ENCODE measurements at regions of chr4 and their contacts with region 1.

Region 1: GRCh38 chr4:184474263-184475095 is at the start of gene IRF2:
- DNase-seq: peak; percentile 99
- H3K4me3 ChIP-seq: peak within 1 kb of the TSS; percentile 60 to 87 (median 80)
- H3K27ac ChIP-seq: peak within 1 kb of the TSS; percentile 96 to 100 (median 100)
- H3K4me1 ChIP-seq: peaks cover 49 to 76% (median 67%) of the 10 kb centered on the region in 6 donors
- H3K27me3 ChIP-seq: no peaks in the 10 kb centered on the region
- CTCF ChIP-seq: peak in 8 of 11 experiments; percentile 24 to 70 (median 54)
- POLR2A ChIP-seq: peak; percentile 91 to 97 (median 96)
- total RNA-seq, gene IRF2: 83.2 to 101 (median 90.1) TPM

Region 2: GRCh38 chr4:184263910-184264732 is 210.4 kb before region 1 on chr4:
- intact Hi-C with region 1: loop called (anchors 10 kb)
- DNase-seq: peak; percentile 96
- H3K4me3 ChIP-seq: peak overlapping the region in 1 of 8 donors; percentile 43
- H3K27ac ChIP-seq: peak overlapping the region in 5 of 8 donors; percentile 20 to 71 (median 60)
- H3K4me1 ChIP-seq: peaks cover 3 to 57% (median 45%) of the 10 kb centered on the region in 6 donors
- H3K27me3 ChIP-seq: no peaks in the 10 kb centered on the region
- CTCF ChIP-seq: peak; percentile 54 to 95 (median 89)
- POLR2A ChIP-seq: no peak

Region 3: GRCh38 chr4:184343502-184344177 is 130.8 kb before region 1 on chr4:
- intact Hi-C with region 1: loop called (anchors 10 kb)
- DNase-seq: peak; percentile 91
- H3K4me3 ChIP-seq: peak overlapping the region; percentile 33 to 71 (median 47)
- H3K27ac ChIP-seq: peak overlapping the region; percentile 37 to 96 (median 92)
- H3K4me1 ChIP-seq: peaks cover 47 to 86% (median 68%) of the 10 kb centered on the region in 6 donors
- H3K27me3 ChIP-seq: no peaks in the 10 kb centered on the region
- CTCF ChIP-seq: no peak
- POLR2A ChIP-seq: peak in 1 of 3 donors; percentile 45

Region 4: DNA sequence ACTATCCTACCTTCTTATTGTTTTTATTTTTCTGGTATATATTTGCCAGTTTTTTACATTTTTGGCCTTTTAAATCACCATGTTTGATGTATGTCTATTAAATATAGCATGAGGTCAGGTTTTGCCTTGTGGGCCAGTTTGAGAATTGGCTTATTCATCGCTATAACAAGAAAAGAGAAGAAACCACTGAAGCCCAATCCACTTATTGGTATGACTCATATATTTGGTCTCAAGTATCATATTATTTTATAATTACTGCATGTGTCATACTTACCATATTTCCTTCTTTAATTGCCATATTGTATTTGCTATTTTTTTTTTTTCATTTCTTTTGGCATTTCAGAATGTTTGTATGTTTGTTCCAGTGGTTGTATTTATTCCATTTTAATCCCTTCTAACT is 99.5 kb before region 1 on chr4:
- intact Hi-C with region 1: no loop called
- DNase-seq: no peak
- H3K4me3 ChIP-seq: no peak overlapping the region
- H3K27ac ChIP-seq: no peak overlapping the region
- H3K4me1 ChIP-seq: peaks cover 1 to 22% (median 13%) of the 10 kb centered on the region in 6 donors
- H3K27me3 ChIP-seq: no peaks in the 10 kb centered on the region
- CTCF ChIP-seq: no peak
- POLR2A ChIP-seq: no peak

Region 5: GRCh38 chr4:184417802-184418511 is 56.5 kb before region 1 on chr4:
- intact Hi-C with region 1: loop called (anchors 10 kb)
- DNase-seq: no peak
- H3K4me3 ChIP-seq: peak overlapping the region in 3 of 8 donors; percentile 25 to 57 (median 30)
- H3K27ac ChIP-seq: peak overlapping the region; percentile 70 to 93 (median 83)
- H3K4me1 ChIP-seq: peaks cover 54 to 100% (median 82%) of the 10 kb centered on the region in 6 donors
- H3K27me3 ChIP-seq: no peaks in the 10 kb centered on the region
- CTCF ChIP-seq: no peak
- POLR2A ChIP-seq: no peak

Region 6: GRCh38 chr4:184538023-184538599 is 63.6 kb after region 1 on chr4:
- intact Hi-C with region 1: loop called (anchors 10 kb)
- DNase-seq: peak; percentile 92
- H3K4me3 ChIP-seq: peak overlapping the region; percentile 52 to 82 (median 55)
- H3K27ac ChIP-seq: peak overlapping the region; percentile 95 to 99 (median 98)
- H3K4me1 ChIP-seq: peaks cover 24 to 47% (median 44%) of the 10 kb centered on the region in 6 donors
- H3K27me3 ChIP-seq: no peaks in the 10 kb centered on the region
- CTCF ChIP-seq: peak; percentile 58 to 93 (median 79)
- POLR2A ChIP-seq: no peak

Region 7: GRCh38 chr4:184815046-184815877 is 340.8 kb after region 1 on chr4:
- intact Hi-C with region 1: no loop called
- DNase-seq: peak; percentile 84
- H3K4me3 ChIP-seq: peak overlapping the region in 5 of 8 donors; percentile 3 to 41 (median 17)
- H3K27ac ChIP-seq: peak overlapping the region in 7 of 8 donors; percentile 63 to 96 (median 82)
- H3K4me1 ChIP-seq: peaks cover 22 to 99% (median 67%) of the 10 kb centered on the region in 6 donors
- H3K27me3 ChIP-seq: no peaks in the 10 kb centered on the region
- CTCF ChIP-seq: no peak
- POLR2A ChIP-seq: no peak

Region 8: GRCh38 chr4:184825896-184826690 is 351.6 kb after region 1 on chr4 and contains the start of gene ACSL1:
- intact Hi-C with region 1: no loop called
- DNase-seq: peak; percentile 97
- H3K4me3 ChIP-seq: peak within 1 kb of the TSS; percentile 62 to 93 (median 73)
- H3K27ac ChIP-seq: peak within 1 kb of the TSS; percentile 68 to 96 (median 90)
- H3K4me1 ChIP-seq: peaks cover 12 to 49% (median 33%) of the 10 kb centered on the region in 6 donors
- H3K27me3 ChIP-seq: no peaks in the 10 kb centered on the region
- CTCF ChIP-seq: peak in 1 of 11 experiments; percentile 18
- POLR2A ChIP-seq: peak in 2 of 3 donors; percentile 42 to 53
- total RNA-seq, gene ACSL1: 79.9 to 333 (median 142) TPM

Region 9: DNA sequence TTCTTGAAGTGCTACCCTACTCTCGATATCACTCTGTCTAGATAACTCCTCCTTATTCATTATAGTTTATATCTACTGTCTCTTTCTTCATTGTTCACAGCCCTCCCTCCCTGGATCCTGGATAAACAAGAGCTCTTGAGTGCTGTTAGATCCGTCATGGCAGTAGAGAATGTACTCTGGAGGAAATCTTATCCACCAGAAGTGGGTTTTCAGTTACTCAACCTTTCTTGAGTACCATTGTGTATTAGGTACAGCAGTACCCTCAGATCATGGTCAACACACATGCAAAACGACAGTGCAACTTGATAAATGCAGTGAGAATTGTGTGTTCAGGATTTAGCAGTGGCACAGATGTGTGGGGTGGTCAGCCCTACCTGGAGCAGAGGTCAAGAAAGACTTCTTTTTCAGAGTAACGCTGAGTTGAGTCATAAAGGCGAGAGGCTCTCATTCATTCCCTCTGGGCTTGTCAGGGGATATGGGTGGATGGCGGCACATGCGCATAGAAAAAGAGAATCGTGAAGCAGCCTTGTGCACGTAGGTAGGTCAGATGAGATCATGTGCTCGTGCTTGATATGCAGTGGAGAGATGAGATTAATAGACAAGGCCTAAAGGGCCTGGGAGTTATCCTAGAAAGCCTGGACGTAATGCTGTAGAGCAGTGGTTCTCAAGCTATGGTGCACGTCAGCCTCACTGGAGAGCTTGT is 824.4 kb after region 1 on chr4:
- intact Hi-C with region 1: no loop called
- DNase-seq: no peak
- H3K4me3 ChIP-seq: no peak overlapping the region
- H3K27ac ChIP-seq: no peak overlapping the region
- H3K4me1 ChIP-seq: no peaks in the 10 kb centered on the region
- H3K27me3 ChIP-seq: no peaks in the 10 kb centered on the region
- CTCF ChIP-seq: no peak
- POLR2A ChIP-seq: no peak